Endothelial cell of umbilical vein (primary cell): ENCODE measurements at regions of chr13 and their contacts with region 1.

Region 1: GRCh38 chr13:46553886-46554858 is 1.2 kb downstream of the LRCH1 start:
- DNase-seq: peak; percentile 67
- H3K4me3 ChIP-seq: peak overlapping the region; percentile 72 to 92 (median 87)
- H3K27ac ChIP-seq: peak overlapping the region; percentile 57
- H3K4me1 ChIP-seq: peaks cover 31% of the 10 kb centered on the region
- H3K27me3 ChIP-seq: no peaks in the 10 kb centered on the region
- CTCF ChIP-seq: no peak
- POLR2A ChIP-seq: no peak

Region 2: GRCh38 chr13:46521921-46522747 is 32.0 kb before region 1 on chr13:
- CTCF ChIA-PET with region 1: interaction called, 5 read pairs
- POLR2A ChIA-PET with region 1: no interaction called
- dilution Hi-C with region 1: no loop called
- intact Hi-C with region 1: loop called (anchors 2 kb)
- DNase-seq: no peak
- H3K4me3 ChIP-seq: no peak overlapping the region
- H3K27ac ChIP-seq: no peak overlapping the region
- H3K4me1 ChIP-seq: peaks cover 4% of the 10 kb centered on the region
- H3K27me3 ChIP-seq: peaks cover 6 to 9% of the 10 kb centered on the region in 2 experiments
- CTCF ChIP-seq: no peak
- POLR2A ChIP-seq: no peak

Region 3: DNA sequence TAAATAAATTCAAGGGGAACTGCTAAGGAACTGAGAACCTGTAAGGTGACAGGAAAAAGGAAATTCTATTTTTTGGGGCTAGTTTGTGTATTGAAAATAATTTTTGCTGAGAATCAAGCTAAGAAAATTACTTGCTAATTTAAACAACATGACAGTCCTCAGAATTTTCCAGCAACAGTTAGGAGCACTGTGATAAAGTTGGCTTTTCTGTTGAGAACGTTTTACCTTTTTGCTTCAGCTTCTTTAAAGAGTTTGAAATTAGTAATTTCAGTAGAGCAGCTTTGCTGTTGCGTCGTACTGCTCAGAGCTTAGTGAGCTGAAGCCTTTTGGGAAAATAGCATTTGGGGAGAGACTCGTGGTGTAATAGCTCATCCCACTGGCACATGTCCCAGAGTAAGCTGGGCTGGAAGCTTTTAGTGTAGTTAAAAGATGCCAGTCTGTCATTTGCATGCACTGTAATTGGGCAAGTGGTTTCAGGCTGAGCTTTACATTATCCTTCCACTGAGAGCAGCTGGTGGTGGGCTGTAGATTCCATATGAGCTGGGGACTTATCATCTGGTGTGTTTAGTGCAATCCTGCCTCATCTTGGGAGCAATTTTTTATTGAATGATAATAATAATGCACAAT is 68.6 kb after region 1 on chr13:
- CTCF ChIA-PET with region 1: interaction called, 10 read pairs
- POLR2A ChIA-PET with region 1: no interaction called
- dilution Hi-C with region 1: no loop called
- intact Hi-C with region 1: no loop called
- DNase-seq: no peak
- H3K4me3 ChIP-seq: no peak overlapping the region
- H3K27ac ChIP-seq: no peak overlapping the region
- H3K4me1 ChIP-seq: peaks cover 5% of the 10 kb centered on the region
- H3K27me3 ChIP-seq: no peaks in the 10 kb centered on the region
- CTCF ChIP-seq: no peak
- POLR2A ChIP-seq: no peak

Region 4: GRCh38 chr13:46662690-46663089 is 108.5 kb after region 1 on chr13:
- CTCF ChIA-PET with region 1: interaction called, 6 read pairs
- POLR2A ChIA-PET with region 1: no interaction called
- dilution Hi-C with region 1: no loop called
- intact Hi-C with region 1: loop called (anchors 1 kb)
- DNase-seq: no peak
- H3K4me3 ChIP-seq: no peak overlapping the region
- H3K27ac ChIP-seq: peak overlapping the region; percentile 46
- H3K4me1 ChIP-seq: peaks cover 37% of the 10 kb centered on the region
- H3K27me3 ChIP-seq: no peaks in the 10 kb centered on the region
- CTCF ChIP-seq: no peak
- POLR2A ChIP-seq: no peak

Region 5: GRCh38 chr13:46721054-46721453 is 166.9 kb after region 1 on chr13:
- CTCF ChIA-PET with region 1: interaction called, 204 read pairs
- POLR2A ChIA-PET with region 1: no interaction called
- dilution Hi-C with region 1: no loop called
- intact Hi-C with region 1: loop called (anchors 1 kb)
- DNase-seq: peak; percentile 83
- H3K4me3 ChIP-seq: no peak overlapping the region
- H3K27ac ChIP-seq: no peak overlapping the region
- H3K4me1 ChIP-seq: peaks cover 12% of the 10 kb centered on the region
- H3K27me3 ChIP-seq: peaks cover 0 to 9% of the 10 kb centered on the region in 2 experiments
- CTCF ChIP-seq: peak; percentile 36 to 51
- POLR2A ChIP-seq: no peak